Heart right ventricle (tissue), 16 donors: ENCODE measurements at regions of chr2 and their contacts with region 1.

Region 1: DNA sequence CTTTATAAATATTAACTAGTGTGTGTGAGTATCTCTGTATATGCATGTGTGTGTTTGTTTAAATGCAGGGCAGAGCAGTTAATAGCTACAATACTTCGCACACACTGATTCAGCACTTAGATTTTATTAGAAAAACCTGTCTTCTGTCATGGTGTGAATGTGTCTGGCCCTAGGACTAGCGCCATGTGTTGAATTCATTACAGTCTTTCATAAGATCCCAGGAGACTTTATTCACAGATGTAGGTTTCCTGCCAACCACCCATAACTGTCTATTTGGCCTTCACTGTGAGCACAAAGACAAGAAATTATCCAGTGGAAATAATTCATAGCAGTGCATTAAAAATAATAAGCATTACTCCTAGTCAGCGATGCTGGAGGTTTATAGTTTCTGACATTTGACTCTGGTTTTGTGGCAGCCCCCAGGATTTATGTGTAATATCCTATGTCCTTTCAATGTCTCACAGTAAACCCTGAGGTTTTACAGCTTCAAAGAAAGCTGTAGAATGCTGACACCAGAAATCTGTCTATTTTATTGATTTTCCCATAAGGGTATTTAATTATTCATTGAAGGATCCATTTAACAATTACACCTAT is 93.9 kb downstream of the ZNF804A start:
- DNase-seq: no peak
- ATAC-seq: no peak
- H3K4me3 ChIP-seq: no peak overlapping the region
- H3K27ac ChIP-seq: no peak overlapping the region
- H3K4me1 ChIP-seq: no peaks in the 10 kb centered on the region
- H3K27me3 ChIP-seq: no peaks in the 10 kb centered on the region
- CTCF ChIP-seq: no peak

Region 2: GRCh38 chr2:185268651-185269050 is 576.4 kb after region 1 on chr2:
- intact Hi-C with region 1: loop called in 1 of 10 experiments (anchors 10 kb)
- DNase-seq: no peak
- ATAC-seq: no peak
- H3K4me3 ChIP-seq: no peak overlapping the region
- H3K27ac ChIP-seq: no peak overlapping the region
- H3K4me1 ChIP-seq: no peaks in the 10 kb centered on the region
- H3K27me3 ChIP-seq: no peaks in the 10 kb centered on the region
- CTCF ChIP-seq: no peak